ENCODE measurements at regions of chr15 and their contacts with region 1.

Region 1: DNA sequence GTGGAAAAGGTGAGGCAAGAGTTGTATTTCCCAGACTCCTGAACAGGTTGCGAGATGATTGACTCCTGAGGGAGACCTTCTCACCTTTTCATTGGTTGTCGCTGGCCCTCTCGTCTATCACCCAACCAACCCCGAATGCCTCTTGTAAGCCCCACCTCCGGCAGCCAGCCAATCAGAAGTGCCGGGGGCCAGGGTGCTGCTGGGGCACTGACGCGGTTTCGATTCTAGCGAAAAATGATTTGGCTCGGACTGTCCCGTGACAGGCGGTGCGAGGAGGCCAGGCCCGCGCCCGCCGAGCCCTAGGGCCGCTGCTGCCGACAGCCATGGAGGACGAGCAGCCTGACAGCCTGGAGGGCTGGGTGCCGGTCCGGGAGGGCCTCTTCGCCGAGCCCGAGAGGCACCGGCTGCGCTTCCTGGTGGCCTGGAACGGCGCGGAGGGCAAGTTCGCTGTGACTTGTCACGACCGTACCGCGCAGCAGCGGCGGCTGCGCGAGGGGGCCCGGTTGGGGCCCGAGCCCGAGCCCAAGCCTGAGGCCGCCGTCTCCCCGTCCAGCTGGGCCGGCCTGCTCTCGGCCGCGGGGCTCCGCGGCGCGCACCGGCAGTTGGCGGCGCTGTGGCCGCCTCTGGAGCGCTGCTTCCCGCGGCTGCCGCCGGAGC is at the start of gene WHAMM:
- DNase-seq: peak; percentile 97
- ATAC-seq: peak; percentile 97
- H3K4me3 Mint-ChIP-seq: peak within 1 kb of the TSS; percentile 89
- H3K27ac Mint-ChIP-seq: peak within 1 kb of the TSS; percentile 86
- H3K4me1 Mint-ChIP-seq: peaks cover 34% of the 10 kb centered on the region
- H3K27me3 Mint-ChIP-seq: no peaks in the 10 kb centered on the region
- total RNA-seq, gene WHAMM: 3.4 to 4.0 TPM

Region 2: GRCh38 chr15:82530606-82531379 is 278.7 kb before region 1 on chr15:
- CTCF ChIA-PET with region 1: no interaction called
- POLR2A ChIA-PET with region 1: interaction called, 3 read pairs
- intact Hi-C with region 1: loop called in 1 of 2 experiments (anchors 10 kb)
- DNase-seq: peak; percentile 79
- ATAC-seq: peak; percentile 84
- H3K4me3 Mint-ChIP-seq: peak overlapping the region; percentile 2
- H3K27ac Mint-ChIP-seq: peak overlapping the region; percentile 41
- H3K4me1 Mint-ChIP-seq: peaks cover 10% of the 10 kb centered on the region
- H3K27me3 Mint-ChIP-seq: no peaks in the 10 kb centered on the region

Region 3: GRCh38 chr15:82611348-82611747 is 198.2 kb before region 1 on chr15:
- CTCF ChIA-PET with region 1: no interaction called
- POLR2A ChIA-PET with region 1: no interaction called
- intact Hi-C with region 1: no loop called
- DNase-seq: no peak
- ATAC-seq: no peak
- H3K4me3 Mint-ChIP-seq: no peak overlapping the region
- H3K27ac Mint-ChIP-seq: no peak overlapping the region
- H3K4me1 Mint-ChIP-seq: no peaks in the 10 kb centered on the region
- H3K27me3 Mint-ChIP-seq: peaks cover 8% of the 10 kb centered on the region

Region 4: GRCh38 chr15:82680200-82681102 is 129.1 kb before region 1 on chr15:
- CTCF ChIA-PET with region 1: no interaction called
- POLR2A ChIA-PET with region 1: no interaction called
- intact Hi-C with region 1: loop called in 1 of 2 experiments (anchors 1 kb)
- DNase-seq: peak; percentile 90
- ATAC-seq: peak; percentile 96
- H3K4me3 Mint-ChIP-seq: peak overlapping the region; percentile 80
- H3K27ac Mint-ChIP-seq: peak overlapping the region; percentile 85
- H3K4me1 Mint-ChIP-seq: peaks cover 10% of the 10 kb centered on the region
- H3K27me3 Mint-ChIP-seq: peaks cover 7% of the 10 kb centered on the region

Region 5: GRCh38 chr15:82749951-82750830 is 59.3 kb before region 1 on chr15:
- CTCF ChIA-PET with region 1: interaction called, 8 read pairs
- POLR2A ChIA-PET with region 1: interaction called, 5 read pairs
- intact Hi-C with region 1: loop called (anchors 1 to 2 kb)
- DNase-seq: peak; percentile 91
- ATAC-seq: peak; percentile 95
- H3K4me3 Mint-ChIP-seq: peak overlapping the region; percentile 86
- H3K27ac Mint-ChIP-seq: peak overlapping the region; percentile 98
- H3K4me1 Mint-ChIP-seq: peaks cover 44% of the 10 kb centered on the region
- H3K27me3 Mint-ChIP-seq: no peaks in the 10 kb centered on the region

Region 6: DNA sequence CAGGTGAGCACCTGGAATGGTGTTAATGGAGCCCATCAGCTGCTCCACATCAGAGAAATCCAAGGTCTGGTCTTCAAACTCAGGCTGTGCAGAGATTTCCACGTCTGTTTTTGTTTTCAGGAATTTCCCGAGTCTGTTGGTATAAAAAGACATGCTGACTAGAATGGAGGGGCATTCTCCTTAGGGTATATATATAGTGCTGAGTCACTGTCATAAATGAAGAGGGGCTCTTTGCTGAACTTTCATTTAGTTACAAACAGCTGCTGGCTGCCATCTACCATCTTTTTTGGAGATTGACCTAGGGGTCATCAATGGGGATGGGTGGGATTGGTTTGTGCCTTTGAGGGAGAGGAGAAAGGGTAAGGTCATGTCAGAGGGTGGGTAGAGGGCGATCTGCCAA is 30.8 kb before region 1 on chr15:
- CTCF ChIA-PET with region 1: no interaction called
- POLR2A ChIA-PET with region 1: no interaction called
- intact Hi-C with region 1: no loop called
- DNase-seq: no peak
- ATAC-seq: no peak
- H3K4me3 Mint-ChIP-seq: no peak overlapping the region
- H3K27ac Mint-ChIP-seq: no peak overlapping the region
- H3K4me1 Mint-ChIP-seq: no peaks in the 10 kb centered on the region
- H3K27me3 Mint-ChIP-seq: no peaks in the 10 kb centered on the region

Region 7: GRCh38 chr15:82789491-82789890 is 20.0 kb before region 1 on chr15:
- CTCF ChIA-PET with region 1: no interaction called
- POLR2A ChIA-PET with region 1: no interaction called
- intact Hi-C with region 1: no loop called
- DNase-seq: no peak
- ATAC-seq: no peak
- H3K4me3 Mint-ChIP-seq: no peak overlapping the region
- H3K27ac Mint-ChIP-seq: no peak overlapping the region
- H3K4me1 Mint-ChIP-seq: no peaks in the 10 kb centered on the region
- H3K27me3 Mint-ChIP-seq: no peaks in the 10 kb centered on the region

Region 8: DNA sequence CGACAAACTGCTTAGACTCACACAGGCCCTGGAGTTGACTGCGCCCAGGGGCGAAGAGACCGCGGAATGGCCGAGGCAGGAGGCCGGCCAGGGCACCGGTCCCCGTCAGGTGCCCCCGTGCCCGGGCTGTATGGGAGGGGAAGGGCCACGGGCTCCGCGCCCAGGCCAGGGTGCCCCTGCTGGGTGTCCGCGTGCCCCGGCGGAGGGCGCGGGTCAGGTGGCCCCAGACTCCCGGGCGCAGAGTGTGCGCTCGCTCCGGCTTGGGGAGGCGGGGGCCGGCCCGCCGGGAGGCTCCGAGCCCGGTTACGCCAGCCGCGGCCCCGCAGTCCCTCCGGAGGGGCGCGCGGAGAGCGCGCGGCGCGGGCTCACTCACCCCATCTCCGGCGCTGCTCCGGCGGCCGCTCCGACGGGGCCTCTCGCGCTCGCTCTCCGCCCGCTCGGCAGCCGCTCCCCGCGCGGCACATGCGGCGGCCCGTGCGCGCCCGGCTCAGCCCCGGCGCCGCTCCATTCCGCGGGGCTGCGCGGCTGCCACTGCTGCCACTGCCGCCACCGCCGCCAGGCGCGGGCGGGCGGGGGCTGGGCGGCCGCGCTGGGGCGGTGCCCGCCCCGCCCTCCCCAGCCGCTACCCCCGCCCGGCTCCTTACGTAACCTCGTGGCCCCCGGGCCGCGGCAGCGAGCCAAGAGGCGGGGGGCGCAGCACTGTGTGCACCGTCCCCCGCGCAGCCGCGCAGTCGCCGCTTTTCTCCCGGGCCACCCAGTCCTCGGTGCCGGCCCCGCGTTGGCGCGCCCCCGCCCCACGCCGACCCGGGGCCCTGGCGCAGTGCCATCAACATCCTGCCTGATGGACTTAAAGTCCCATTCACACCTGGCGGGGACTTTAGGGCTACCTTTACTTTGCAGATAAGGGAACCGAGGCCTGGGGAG is 142.9 kb after region 1 on chr15 and contains the start of gene HOMER2:
- CTCF ChIA-PET with region 1: no interaction called
- POLR2A ChIA-PET with region 1: no interaction called
- intact Hi-C with region 1: loop called in 1 of 2 experiments (anchors 2 kb)
- DNase-seq: peak; percentile 35
- ATAC-seq: peak; percentile 57
- H3K4me3 Mint-ChIP-seq: peak within 1 kb of the TSS; percentile 67
- H3K27ac Mint-ChIP-seq: peak within 1 kb of the TSS; percentile 65
- H3K4me1 Mint-ChIP-seq: peaks cover 2% of the 10 kb centered on the region
- H3K27me3 Mint-ChIP-seq: peaks cover 9% of the 10 kb centered on the region
- total RNA-seq, gene HOMER2: 3.5 to 4.6 TPM

Region 9: GRCh38 chr15:83066734-83067637 is 257.5 kb after region 1 on chr15 and contains the start of gene BTBD1:
- CTCF ChIA-PET with region 1: no interaction called
- POLR2A ChIA-PET with region 1: no interaction called
- intact Hi-C with region 1: loop called in 1 of 2 experiments (anchors 2 kb)
- DNase-seq: peak; percentile 96
- ATAC-seq: peak; percentile 98
- H3K4me3 Mint-ChIP-seq: peak within 1 kb of the TSS; percentile 79
- H3K27ac Mint-ChIP-seq: peak within 1 kb of the TSS; percentile 86
- H3K4me1 Mint-ChIP-seq: peaks cover 20% of the 10 kb centered on the region
- H3K27me3 Mint-ChIP-seq: no peaks in the 10 kb centered on the region
- total RNA-seq, gene BTBD1: 58.3 to 77.6 TPM

Region 10: DNA sequence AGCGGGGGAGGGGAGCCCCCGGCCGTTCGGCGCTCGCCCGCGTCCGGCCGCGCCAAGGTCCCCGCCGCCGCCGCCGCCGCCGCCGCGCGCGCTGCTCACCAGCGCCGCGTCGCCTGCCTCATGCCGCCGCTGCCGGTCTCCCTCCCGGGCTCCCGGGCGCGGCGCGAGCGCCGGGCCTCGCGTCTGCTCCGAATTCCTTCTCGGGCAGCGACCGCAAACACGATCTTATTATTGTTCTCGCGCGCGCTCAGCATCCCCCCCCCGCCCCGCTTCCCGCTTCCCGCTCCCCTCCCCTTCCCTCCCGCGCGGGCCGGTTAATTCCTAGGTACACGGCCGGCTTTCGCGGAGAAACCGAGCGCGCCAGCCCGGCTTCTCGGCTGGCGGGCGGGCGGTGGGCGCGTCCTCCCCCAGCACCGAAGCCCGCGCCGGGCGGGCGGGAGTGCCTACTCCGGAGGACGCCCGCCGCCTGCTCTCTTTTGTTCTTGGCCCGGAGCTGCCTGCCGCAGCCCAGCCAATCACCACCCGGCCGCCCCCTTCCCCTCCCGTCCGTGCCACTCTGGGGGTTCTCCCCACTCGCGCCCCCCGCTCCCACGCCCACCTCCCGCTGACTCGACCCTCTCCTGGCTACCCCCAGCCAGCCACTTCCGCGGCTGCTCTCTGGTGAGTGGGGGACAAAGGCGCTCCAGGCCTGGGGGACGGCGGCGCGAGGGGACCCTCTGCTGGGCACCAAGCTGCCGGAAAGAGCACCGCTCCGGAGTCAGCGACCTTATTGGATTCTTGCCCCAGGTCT is 398.3 kb after region 1 on chr15 and contains the start of gene HDGFL3:
- CTCF ChIA-PET with region 1: no interaction called
- POLR2A ChIA-PET with region 1: no interaction called
- intact Hi-C with region 1: loop called in 1 of 2 experiments (anchors 5 kb)
- DNase-seq: peak; percentile 50
- ATAC-seq: peak; percentile 60
- H3K4me3 Mint-ChIP-seq: peak within 1 kb of the TSS; percentile 69
- H3K27ac Mint-ChIP-seq: no peak within 1 kb of the TSS
- H3K4me1 Mint-ChIP-seq: peaks cover 9% of the 10 kb centered on the region
- H3K27me3 Mint-ChIP-seq: peaks cover 25% of the 10 kb centered on the region
- total RNA-seq, gene HDGFL3: 5.0 to 7.4 TPM

Region 11: DNA sequence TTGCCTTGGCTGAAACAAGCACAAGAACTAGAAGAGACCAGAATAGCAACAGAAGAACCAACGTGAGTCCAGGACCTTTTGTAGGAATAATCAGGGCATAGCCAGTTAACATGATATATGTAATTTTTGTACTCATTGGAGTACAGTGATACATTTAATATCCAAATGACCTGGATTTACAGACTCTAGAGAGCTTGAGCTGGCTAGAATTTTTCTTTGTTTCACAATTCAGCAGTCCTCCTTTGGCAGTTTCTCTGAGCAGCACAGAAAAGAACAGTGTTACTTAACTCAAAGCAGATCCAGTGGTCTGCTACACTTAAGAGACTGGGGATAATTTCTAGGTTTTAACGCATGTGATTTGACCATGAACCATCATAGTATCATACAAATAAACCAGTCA is 1090.1 kb after region 1 on chr15:
- CTCF ChIA-PET with region 1: no interaction called
- POLR2A ChIA-PET with region 1: no interaction called
- intact Hi-C with region 1: no loop called
- DNase-seq: no peak
- ATAC-seq: no peak
- H3K4me3 Mint-ChIP-seq: no peak overlapping the region
- H3K27ac Mint-ChIP-seq: no peak overlapping the region
- H3K4me1 Mint-ChIP-seq: no peaks in the 10 kb centered on the region
- H3K27me3 Mint-ChIP-seq: peaks cover 14% of the 10 kb centered on the region

Measured in activated CD4-positive, alpha-beta T cell treated with anti-CD3 and anti-CD28 coated beads for 36 hours (primary cell).